Activated T-helper 1 cell treated with anti-CD3 and anti-CD28 coated beads, Interleukin-12 subunit alpha, Interleukin-12 subunit beta, Interleukin-2, Interleukin-4 antibody, amounts not matched to agents 30 ng/mL and 10 ng/mL and 1 ng/mL, durations not matched to agents 14 hours and 24 hours and 36 hours (primary cell): ENCODE measurements at regions of chr10 and their contacts with region 1.

Region 1: GRCh38 chr10:86755740-86756510 is 494 bp upstream of the BMPR1A start:
- DNase-seq: peak; percentile 86
- H3K4me3 Mint-ChIP-seq: peak overlapping the region; percentile 86
- H3K27ac Mint-ChIP-seq: peak overlapping the region; percentile 86
- H3K4me1 Mint-ChIP-seq: peaks cover 52% of the 10 kb centered on the region
- H3K27me3 Mint-ChIP-seq: peaks cover 38% of the 10 kb centered on the region

Region 2: GRCh38 chr10:86291616-86292340 is 464.1 kb before region 1 on chr10:
- intact Hi-C with region 1: no loop called
- DNase-seq: no peak
- H3K4me3 Mint-ChIP-seq: no peak overlapping the region
- H3K27ac Mint-ChIP-seq: no peak overlapping the region
- H3K4me1 Mint-ChIP-seq: no peaks in the 10 kb centered on the region
- H3K27me3 Mint-ChIP-seq: no peaks in the 10 kb centered on the region

Region 3: GRCh38 chr10:86648706-86649427 is 107.1 kb before region 1 on chr10:
- intact Hi-C with region 1: no loop called
- DNase-seq: no peak
- H3K4me3 Mint-ChIP-seq: no peak overlapping the region
- H3K27ac Mint-ChIP-seq: no peak overlapping the region
- H3K4me1 Mint-ChIP-seq: peaks cover 3% of the 10 kb centered on the region
- H3K27me3 Mint-ChIP-seq: no peaks in the 10 kb centered on the region

Region 4: GRCh38 chr10:86815035-86815617 is 59.2 kb after region 1 on chr10:
- intact Hi-C with region 1: no loop called
- DNase-seq: no peak
- H3K4me3 Mint-ChIP-seq: no peak overlapping the region
- H3K27ac Mint-ChIP-seq: no peak overlapping the region
- H3K4me1 Mint-ChIP-seq: no peaks in the 10 kb centered on the region
- H3K27me3 Mint-ChIP-seq: no peaks in the 10 kb centered on the region

Region 5: GRCh38 chr10:86971232-86971991 is 215.5 kb after region 1 on chr10:
- intact Hi-C with region 1: loop called (anchors 2 kb)
- DNase-seq: peak; percentile 76
- H3K4me3 Mint-ChIP-seq: peak overlapping the region; percentile 77
- H3K27ac Mint-ChIP-seq: peak overlapping the region; percentile 76
- H3K4me1 Mint-ChIP-seq: peaks cover 12% of the 10 kb centered on the region
- H3K27me3 Mint-ChIP-seq: peaks cover 35% of the 10 kb centered on the region